ENCODE measurements at regions of chr17 and their contacts with region 1.

Region 1: GRCh38 chr17:58605470-58605869 is 86.4 kb downstream of the TEX14 start:
- DNase-seq: no peak
- H3K4me3 ChIP-seq: no peak overlapping the region
- H3K27ac ChIP-seq: no peak overlapping the region
- H3K4me1 ChIP-seq: peaks cover 0 to 9% (median 2%) of the 10 kb centered on the region in 4 experiments; a peak in 3 of 7 replicates
- H3K27me3 ChIP-seq: no peaks in the 10 kb centered on the region
- CTCF ChIP-seq: no peak
- EP300 ChIP-seq: no peak
- POLR2A ChIP-seq: no peak
- RAD21 ChIP-seq: no peak

Region 2: GRCh38 chr17:58556833-58557250 is 48.6 kb before region 1 on chr17:
- CTCF ChIA-PET with region 1: no interaction called
- POLR2A ChIA-PET with region 1: no interaction called
- DNase-seq: no peak
- H3K4me3 ChIP-seq: no peak overlapping the region
- H3K27ac ChIP-seq: no peak overlapping the region
- H3K4me1 ChIP-seq: no peaks in the 10 kb centered on the region
- H3K27me3 ChIP-seq: no peaks in the 10 kb centered on the region
- CTCF ChIP-seq: no peak
- EP300 ChIP-seq: no peak
- POLR2A ChIP-seq: no peak
- RAD21 ChIP-seq: no peak

Region 3: DNA sequence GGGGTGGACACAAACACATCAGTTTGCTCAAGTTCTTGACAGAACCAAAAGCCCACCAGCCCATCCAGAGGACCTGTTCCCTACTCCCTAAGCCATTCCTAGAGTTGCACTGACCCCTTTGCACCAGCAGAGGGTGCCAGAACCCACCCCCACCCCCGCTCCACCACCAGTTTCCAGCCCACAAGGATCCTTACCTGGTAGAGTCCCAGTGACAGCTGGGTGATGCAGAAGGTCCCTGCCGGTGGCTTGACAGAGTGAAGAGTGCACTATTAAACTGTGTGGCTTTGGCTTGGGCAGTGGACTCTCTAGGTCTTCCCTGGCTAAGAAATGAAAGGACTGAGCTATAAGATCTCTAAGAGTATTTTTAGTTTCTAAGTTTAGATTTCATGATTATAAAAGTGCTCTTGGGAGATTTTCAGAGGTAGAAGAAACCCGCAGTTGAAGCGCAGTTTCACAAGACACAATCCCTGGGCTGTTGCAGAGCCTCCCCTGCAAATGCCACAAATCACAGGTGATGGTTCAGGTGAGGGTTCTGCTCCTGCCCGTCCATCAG is 17.7 kb before region 1 on chr17:
- CTCF ChIA-PET with region 1: interaction called, 12 read pairs
- POLR2A ChIA-PET with region 1: interaction called, 4 read pairs
- DNase-seq: peak; percentile 46 to 70
- H3K4me3 ChIP-seq: no peak overlapping the region
- H3K27ac ChIP-seq: no peak overlapping the region
- H3K4me1 ChIP-seq: no peaks in the 10 kb centered on the region
- H3K27me3 ChIP-seq: no peaks in the 10 kb centered on the region
- CTCF ChIP-seq: peak; percentile 91 to 96 (median 91)
- EP300 ChIP-seq: no peak
- POLR2A ChIP-seq: no peak
- RAD21 ChIP-seq: peak; percentile 92 to 94